ENCODE measurements at regions of chr5 and their contacts with region 1.

Region 1: GRCh38 chr5:36264202-36264760 is 22.6 kb upstream of the NADK2 start:
- DNase-seq: no peak
- ATAC-seq: no peak
- H3K4me3 ChIP-seq: no peak overlapping the region
- H3K4me3 Mint-ChIP-seq: no peak overlapping the region
- H3K27ac ChIP-seq: no peak overlapping the region
- H3K27ac Mint-ChIP-seq: no peak overlapping the region
- H3K4me1 ChIP-seq: no peaks in the 10 kb centered on the region
- H3K4me1 Mint-ChIP-seq: no peaks in the 10 kb centered on the region
- H3K27me3 ChIP-seq: peaks cover 0 to 5% (median 0%) of the 10 kb centered on the region in 4 experiments
- H3K27me3 Mint-ChIP-seq: peaks cover 10% of the 10 kb centered on the region
- CTCF ChIP-seq: no peak

Region 2: DNA sequence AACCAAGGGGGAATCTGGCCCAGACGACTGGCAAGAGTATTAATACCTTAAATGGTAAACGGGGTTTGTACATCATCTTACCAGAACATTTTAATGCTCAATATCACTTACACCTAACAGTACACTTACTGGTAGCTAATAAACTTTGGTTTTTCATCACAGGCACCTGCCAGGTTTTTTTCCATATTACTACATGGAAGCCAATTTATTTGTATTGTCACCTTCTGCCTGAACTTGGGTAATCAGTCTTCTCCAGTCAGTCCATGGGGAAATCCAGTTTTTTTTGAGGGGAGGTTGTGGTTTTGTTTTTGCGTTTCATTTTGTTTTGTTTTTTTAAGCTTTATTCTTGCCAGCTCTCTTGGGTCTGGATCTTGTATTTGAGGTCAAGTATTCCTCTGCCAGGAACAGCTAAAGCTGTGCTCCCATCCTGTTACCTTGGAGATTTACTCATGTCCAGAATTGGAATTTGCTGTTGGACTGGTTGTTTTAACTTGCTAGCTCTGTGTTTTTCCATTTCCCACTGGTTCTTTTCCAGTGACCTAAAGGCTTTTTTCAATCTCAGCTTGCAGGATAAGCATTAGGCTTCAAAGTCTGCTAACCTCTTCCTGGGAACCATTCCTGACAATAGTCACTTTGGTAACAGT is 11.4 kb before region 1 on chr5:
- CTCF ChIA-PET with region 1: interaction called, 13 read pairs
- POLR2A ChIA-PET with region 1: no interaction called
- intact Hi-C with region 1: no loop called
- DNase-seq: no peak
- ATAC-seq: no peak
- H3K4me3 ChIP-seq: no peak overlapping the region
- H3K4me3 Mint-ChIP-seq: no peak overlapping the region
- H3K27ac ChIP-seq: no peak overlapping the region
- H3K27ac Mint-ChIP-seq: no peak overlapping the region
- H3K4me1 ChIP-seq: no peaks in the 10 kb centered on the region
- H3K4me1 Mint-ChIP-seq: no peaks in the 10 kb centered on the region
- H3K27me3 ChIP-seq: no peaks in the 10 kb centered on the region
- H3K27me3 Mint-ChIP-seq: peaks cover 3% of the 10 kb centered on the region
- CTCF ChIP-seq: no peak

Region 3: GRCh38 chr5:36695677-36696673 is 431.7 kb after region 1 on chr5:
- CTCF ChIA-PET with region 1: interaction called, 41 read pairs
- POLR2A ChIA-PET with region 1: no interaction called
- intact Hi-C with region 1: no loop called
- DNase-seq: peak; percentile 59
- ATAC-seq: peak; percentile 52
- H3K4me3 ChIP-seq: no peak overlapping the region
- H3K4me3 Mint-ChIP-seq: no peak overlapping the region
- H3K27ac ChIP-seq: no peak overlapping the region
- H3K27ac Mint-ChIP-seq: peak overlapping the region; percentile 4
- H3K4me1 ChIP-seq: peaks cover 23 to 25% of the 10 kb centered on the region in 2 donors
- H3K4me1 Mint-ChIP-seq: peaks cover 28% of the 10 kb centered on the region
- H3K27me3 ChIP-seq: no peaks in the 10 kb centered on the region
- H3K27me3 Mint-ChIP-seq: peaks cover 4% of the 10 kb centered on the region
- CTCF ChIP-seq: peak; percentile 72

Region 4: GRCh38 chr5:36790838-36791237 is 526.6 kb after region 1 on chr5:
- CTCF ChIA-PET with region 1: no interaction called
- POLR2A ChIA-PET with region 1: no interaction called
- intact Hi-C with region 1: no loop called
- DNase-seq: no peak
- ATAC-seq: no peak
- H3K4me3 ChIP-seq: no peak overlapping the region
- H3K4me3 Mint-ChIP-seq: no peak overlapping the region
- H3K27ac ChIP-seq: no peak overlapping the region
- H3K27ac Mint-ChIP-seq: no peak overlapping the region
- H3K4me1 ChIP-seq: no peaks in the 10 kb centered on the region
- H3K4me1 Mint-ChIP-seq: peaks cover 9% of the 10 kb centered on the region
- H3K27me3 ChIP-seq: no peaks in the 10 kb centered on the region
- H3K27me3 Mint-ChIP-seq: peaks cover 10% of the 10 kb centered on the region
- CTCF ChIP-seq: no peak

Measured in B cell (primary cell).